Activated CD4-positive, alpha-beta memory T cell treated with anti-CD3 and anti-CD28 coated beads for 36 hours (primary cell): ENCODE measurements at regions of chrX and their contacts with region 1.

Region 1: DNA sequence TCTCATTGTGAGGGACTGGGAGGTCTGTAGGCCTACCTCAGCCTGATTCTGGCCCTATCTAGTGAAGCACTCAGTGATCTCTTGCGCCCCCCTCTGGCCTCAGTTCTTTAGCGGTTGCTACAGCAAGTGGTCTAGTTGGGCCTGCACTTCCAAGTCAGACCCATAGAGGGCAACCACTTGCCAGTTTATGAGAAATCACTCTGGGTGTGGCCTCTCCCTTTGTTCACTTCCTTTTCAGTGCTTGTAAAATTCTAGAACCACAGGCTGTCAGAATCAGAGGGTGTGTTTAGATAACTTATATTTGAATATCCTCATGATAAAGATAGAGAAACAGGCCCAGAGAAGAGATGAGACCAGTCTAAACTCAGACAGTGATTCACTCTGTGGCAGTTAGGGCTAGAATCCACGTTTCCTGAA is 60.9 kb upstream of the LAS1L start:
- DNase-seq: peak; percentile 95
- H3K4me3 Mint-ChIP-seq: peak overlapping the region; percentile 43
- H3K27ac Mint-ChIP-seq: peak overlapping the region; percentile 96
- H3K4me1 Mint-ChIP-seq: peaks cover 49% of the 10 kb centered on the region
- H3K27me3 Mint-ChIP-seq: no peaks in the 10 kb centered on the region

Region 2: GRCh38 chrX:65667503-65668376 is 72.3 kb after region 1 on chrX and contains the start of gene MSN:
- CTCF ChIA-PET with region 1: interaction called, 12 read pairs
- POLR2A ChIA-PET with region 1: interaction called, 11 read pairs
- intact Hi-C with region 1: loop called (anchors 1 kb)
- DNase-seq: peak; percentile 86
- H3K4me3 Mint-ChIP-seq: peak within 1 kb of the TSS; percentile 93
- H3K27ac Mint-ChIP-seq: peak within 1 kb of the TSS; percentile 97
- H3K4me1 Mint-ChIP-seq: peaks cover 29% of the 10 kb centered on the region
- H3K27me3 Mint-ChIP-seq: no peaks in the 10 kb centered on the region
- total RNA-seq, gene MSN: 494 to 502 TPM

Region 3: GRCh38 chrX:65706041-65706828 is 110.8 kb after region 1 on chrX:
- CTCF ChIA-PET with region 1: interaction called, 5 read pairs
- POLR2A ChIA-PET with region 1: interaction called, 3 read pairs
- intact Hi-C with region 1: loop called (anchors 1 kb)
- DNase-seq: peak; percentile 80
- H3K4me3 Mint-ChIP-seq: peak overlapping the region; percentile 33
- H3K27ac Mint-ChIP-seq: peak overlapping the region; percentile 96
- H3K4me1 Mint-ChIP-seq: peaks cover 71% of the 10 kb centered on the region
- H3K27me3 Mint-ChIP-seq: no peaks in the 10 kb centered on the region

Region 4: GRCh38 chrX:65866146-65866545 is 270.7 kb after region 1 on chrX:
- CTCF ChIA-PET with region 1: no interaction called
- POLR2A ChIA-PET with region 1: no interaction called
- intact Hi-C with region 1: loop called (anchors 1 kb)
- DNase-seq: peak; percentile 56
- H3K4me3 Mint-ChIP-seq: no peak overlapping the region
- H3K27ac Mint-ChIP-seq: peak overlapping the region; percentile 51
- H3K4me1 Mint-ChIP-seq: peaks cover 33% of the 10 kb centered on the region
- H3K27me3 Mint-ChIP-seq: no peaks in the 10 kb centered on the region

Region 5: DNA sequence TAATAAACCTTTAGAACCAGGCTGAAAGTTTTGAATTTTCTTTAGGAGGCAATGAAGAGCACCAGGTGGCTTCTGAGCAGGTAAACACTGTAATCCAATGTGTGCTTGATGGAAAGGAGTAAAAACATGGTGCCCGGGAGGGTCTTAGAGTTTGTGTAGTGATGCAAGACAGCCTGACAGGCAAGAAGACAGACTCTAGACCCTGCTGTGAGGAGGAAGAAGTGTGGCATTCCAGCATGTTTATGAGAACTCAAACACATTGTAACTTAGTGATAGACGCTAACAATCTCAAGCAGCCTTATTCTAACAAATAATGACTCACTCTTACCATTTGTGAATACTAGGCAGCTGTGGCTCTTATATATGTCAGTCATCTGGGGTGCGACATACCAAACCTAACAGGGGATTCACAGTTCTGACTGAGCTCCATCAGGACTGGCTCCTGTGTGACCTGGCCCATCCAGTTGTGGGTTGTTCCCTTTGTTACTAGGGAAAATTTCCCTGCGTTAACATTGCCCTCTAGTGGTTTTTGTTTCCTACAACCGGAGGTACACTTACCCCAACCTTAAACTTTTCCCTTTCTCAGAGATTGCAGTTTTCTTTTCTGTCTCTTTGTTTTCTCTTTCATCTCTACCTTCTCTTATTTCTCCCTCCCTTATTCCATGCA is 390.6 kb after region 1 on chrX:
- CTCF ChIA-PET with region 1: interaction called, 5 read pairs
- POLR2A ChIA-PET with region 1: no interaction called
- intact Hi-C with region 1: loop called (anchors 1 kb)
- DNase-seq: peak; percentile 64
- H3K4me3 Mint-ChIP-seq: no peak overlapping the region
- H3K27ac Mint-ChIP-seq: peak overlapping the region; percentile 62
- H3K4me1 Mint-ChIP-seq: peaks cover 16% of the 10 kb centered on the region
- H3K27me3 Mint-ChIP-seq: no peaks in the 10 kb centered on the region